B cell (primary cell): ENCODE measurements at regions of chr4 and their contacts with region 1.

Region 1: DNA sequence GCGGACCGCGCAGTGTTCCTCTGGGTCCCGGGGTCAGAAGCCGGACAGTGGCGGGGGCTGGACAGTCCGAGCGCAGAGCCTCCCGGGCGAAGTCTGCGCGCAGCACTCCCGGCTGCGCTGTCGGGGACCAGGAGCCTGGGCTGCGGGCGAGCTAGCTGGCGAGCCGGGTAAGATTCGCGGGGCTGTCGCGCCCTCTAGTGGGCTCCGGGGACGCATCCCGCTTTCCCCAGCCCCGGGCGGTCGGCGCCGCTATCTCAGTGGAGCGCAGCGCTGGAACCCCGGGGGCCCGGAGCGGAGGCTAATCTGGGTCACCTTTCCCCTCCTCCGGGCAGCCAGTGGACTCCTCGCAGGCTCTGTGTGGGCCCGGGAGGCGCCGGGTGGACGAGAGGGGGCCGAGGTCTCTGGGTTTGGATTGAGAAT is 4.2 kb downstream of the PDGFRA start:
- DNase-seq: peak; percentile 83
- ATAC-seq: peak; percentile 71
- H3K4me3 ChIP-seq: peak overlapping the region in 4 of 5 experiments; percentile 34 to 70 (median 48)
- H3K4me3 Mint-ChIP-seq: peak overlapping the region; percentile 86
- H3K27ac ChIP-seq: no peak overlapping the region
- H3K27ac Mint-ChIP-seq: no peak overlapping the region
- H3K4me1 ChIP-seq: peaks cover 47 to 50% of the 10 kb centered on the region in 2 donors
- H3K4me1 Mint-ChIP-seq: peaks cover 35% of the 10 kb centered on the region
- H3K27me3 ChIP-seq: peaks cover 0 to 62% (median 43%) of the 10 kb centered on the region in 4 experiments
- H3K27me3 Mint-ChIP-seq: peaks cover 61% of the 10 kb centered on the region
- CTCF ChIP-seq: peak; percentile 77

Region 2: GRCh38 chr4:52376132-52376704 is 1857.1 kb before region 1 on chr4:
- CTCF ChIA-PET with region 1: interaction called, 35 read pairs
- POLR2A ChIA-PET with region 1: no interaction called
- intact Hi-C with region 1: loop called (anchors 5 kb)
- DNase-seq: peak; percentile 49
- ATAC-seq: no peak
- H3K4me3 ChIP-seq: no peak overlapping the region
- H3K4me3 Mint-ChIP-seq: no peak overlapping the region
- H3K27ac ChIP-seq: no peak overlapping the region
- H3K27ac Mint-ChIP-seq: no peak overlapping the region
- H3K4me1 ChIP-seq: no peaks in the 10 kb centered on the region
- H3K4me1 Mint-ChIP-seq: no peaks in the 10 kb centered on the region
- H3K27me3 ChIP-seq: peaks cover 0 to 3% (median 0%) of the 10 kb centered on the region in 4 experiments
- H3K27me3 Mint-ChIP-seq: peaks cover 26% of the 10 kb centered on the region
- CTCF ChIP-seq: peak; percentile 80

Region 3: GRCh38 chr4:53490965-53491622 is 742.2 kb before region 1 on chr4:
- CTCF ChIA-PET with region 1: interaction called, 11 read pairs
- POLR2A ChIA-PET with region 1: no interaction called
- intact Hi-C with region 1: loop called (anchors 5 kb)
- DNase-seq: peak; percentile 5
- ATAC-seq: no peak
- H3K4me3 ChIP-seq: no peak overlapping the region
- H3K4me3 Mint-ChIP-seq: no peak overlapping the region
- H3K27ac ChIP-seq: no peak overlapping the region
- H3K27ac Mint-ChIP-seq: no peak overlapping the region
- H3K4me1 ChIP-seq: no peaks in the 10 kb centered on the region
- H3K4me1 Mint-ChIP-seq: no peaks in the 10 kb centered on the region
- H3K27me3 ChIP-seq: peaks cover 0 to 5% (median 0%) of the 10 kb centered on the region in 4 experiments
- H3K27me3 Mint-ChIP-seq: peaks cover 15% of the 10 kb centered on the region
- CTCF ChIP-seq: peak; percentile 42

Region 4: DNA sequence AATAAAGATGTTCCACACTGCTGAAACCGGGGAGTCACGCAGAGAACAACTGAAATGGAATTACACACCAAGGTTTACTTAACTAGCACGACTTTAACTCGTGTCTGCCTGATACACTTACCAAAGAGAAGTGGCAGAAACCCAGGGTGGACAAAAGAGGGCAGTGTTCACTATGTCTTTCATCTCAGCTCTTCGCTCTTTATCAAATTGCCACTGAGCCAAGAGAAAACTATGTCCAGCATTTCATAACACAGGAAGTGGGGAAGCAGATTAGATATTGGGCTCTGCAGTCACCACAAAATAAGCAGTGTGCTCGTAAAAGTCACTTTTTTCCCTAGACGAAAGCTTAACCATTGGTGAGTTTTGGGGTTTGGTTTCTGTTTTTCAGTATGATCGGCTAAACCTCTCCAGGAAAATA is 324.6 kb before region 1 on chr4:
- CTCF ChIA-PET with region 1: interaction called, 56 read pairs
- POLR2A ChIA-PET with region 1: no interaction called
- intact Hi-C with region 1: loop called (anchors 1 kb)
- DNase-seq: peak; percentile 53
- ATAC-seq: no peak
- H3K4me3 ChIP-seq: peak overlapping the region in 1 of 5 experiments; percentile 27
- H3K4me3 Mint-ChIP-seq: peak overlapping the region; percentile 10
- H3K27ac ChIP-seq: no peak overlapping the region
- H3K27ac Mint-ChIP-seq: no peak overlapping the region
- H3K4me1 ChIP-seq: peaks cover 9 to 13% of the 10 kb centered on the region in 2 donors
- H3K4me1 Mint-ChIP-seq: peaks cover 12% of the 10 kb centered on the region
- H3K27me3 ChIP-seq: peaks cover 0 to 24% (median 18%) of the 10 kb centered on the region in 4 experiments
- H3K27me3 Mint-ChIP-seq: peaks cover 56% of the 10 kb centered on the region
- CTCF ChIP-seq: peak; percentile 64

Region 5: GRCh38 chr4:54100595-54101189 is 132.6 kb before region 1 on chr4:
- CTCF ChIA-PET with region 1: interaction called, 6 read pairs
- POLR2A ChIA-PET with region 1: no interaction called
- intact Hi-C with region 1: loop called (anchors 2 kb)
- DNase-seq: peak; percentile 60
- ATAC-seq: peak; percentile 37
- H3K4me3 ChIP-seq: peak overlapping the region in 3 of 5 experiments; percentile 36 to 57 (median 43)
- H3K4me3 Mint-ChIP-seq: peak overlapping the region; percentile 82
- H3K27ac ChIP-seq: no peak overlapping the region
- H3K27ac Mint-ChIP-seq: peak overlapping the region; percentile 20
- H3K4me1 ChIP-seq: peaks cover 53 to 65% of the 10 kb centered on the region in 2 donors
- H3K4me1 Mint-ChIP-seq: peaks cover 53% of the 10 kb centered on the region
- H3K27me3 ChIP-seq: peaks cover 0 to 95% (median 80%) of the 10 kb centered on the region in 4 experiments
- H3K27me3 Mint-ChIP-seq: peaks cover 80% of the 10 kb centered on the region
- CTCF ChIP-seq: no peak